Tibial artery (tissue), 4 donors: ENCODE measurements at regions of chr14 and their contacts with region 1.

Region 1: DNA sequence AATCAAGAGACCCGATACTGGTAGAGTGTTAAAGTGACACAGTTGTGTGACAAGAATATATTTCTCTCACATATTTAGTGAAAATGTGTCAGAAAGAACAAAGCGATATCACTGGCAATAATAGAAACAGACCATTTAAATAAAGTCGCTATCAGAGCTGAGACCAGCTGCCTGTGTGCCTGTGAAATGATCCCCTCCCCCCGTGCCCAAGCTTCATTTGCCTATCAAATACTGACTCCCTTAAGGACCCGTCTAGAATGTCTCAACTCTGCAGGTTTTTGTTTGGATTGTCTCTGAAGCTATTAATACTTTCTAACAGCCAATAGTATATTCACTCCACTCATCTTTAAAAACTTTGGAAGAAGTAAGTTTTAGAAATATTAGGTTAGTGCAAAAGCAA is 98.9 kb downstream of the EGLN3 start:
- DNase-seq: no peak
- H3K4me3 ChIP-seq: no peak overlapping the region
- H3K27ac ChIP-seq: no peak overlapping the region
- H3K4me1 ChIP-seq: no peaks in the 10 kb centered on the region
- H3K27me3 ChIP-seq: no peaks in the 10 kb centered on the region
- CTCF ChIP-seq: no peak

Region 2: GRCh38 chr14:33317675-33318074 is 534.3 kb before region 1 on chr14:
- intact Hi-C with region 1: no loop called
- DNase-seq: no peak
- H3K4me3 ChIP-seq: no peak overlapping the region
- H3K27ac ChIP-seq: no peak overlapping the region
- H3K4me1 ChIP-seq: no peaks in the 10 kb centered on the region
- H3K27me3 ChIP-seq: no peaks in the 10 kb centered on the region
- CTCF ChIP-seq: no peak

Region 3: DNA sequence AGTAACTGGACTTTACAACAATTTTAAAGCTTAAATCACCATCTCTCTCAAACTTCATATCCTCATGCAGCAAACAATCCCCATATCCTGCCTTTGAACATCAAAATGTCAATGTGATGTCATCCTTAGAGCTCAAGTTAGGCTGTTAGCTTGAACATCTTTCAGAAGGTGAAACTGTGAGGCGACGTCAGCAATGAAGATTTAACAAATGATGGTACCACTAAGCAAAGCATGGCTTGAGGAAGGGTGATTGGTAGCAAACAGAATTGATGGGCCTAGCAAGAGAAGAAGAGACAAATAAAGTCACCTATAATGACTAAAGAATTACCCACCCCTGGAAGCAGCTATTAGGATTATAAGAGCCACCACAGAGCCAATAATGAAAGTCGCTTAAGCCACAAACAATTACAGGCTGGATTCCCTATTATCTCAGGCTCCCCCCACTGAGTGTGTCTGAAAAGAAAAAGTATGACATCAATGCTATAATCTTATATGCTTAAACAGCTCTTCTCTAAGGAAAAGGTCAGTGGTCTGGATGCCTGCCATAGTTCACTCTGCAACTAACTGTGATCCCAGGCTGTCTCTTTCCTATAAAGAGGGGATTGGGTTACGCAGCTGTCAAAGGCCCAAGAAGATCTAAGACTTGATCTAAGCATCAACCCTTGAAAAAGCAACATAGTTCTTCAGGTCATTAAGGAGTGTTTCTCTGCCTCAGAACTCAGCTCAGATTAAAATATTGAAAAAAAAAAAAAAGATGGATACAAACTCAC is 80.8 kb after region 1 on chr14:
- intact Hi-C with region 1: no loop called
- DNase-seq: no peak
- H3K4me3 ChIP-seq: no peak overlapping the region
- H3K27ac ChIP-seq: no peak overlapping the region
- H3K4me1 ChIP-seq: peaks cover 0 to 47% (median 5%) of the 10 kb centered on the region in 4 donors
- H3K27me3 ChIP-seq: no peaks in the 10 kb centered on the region
- CTCF ChIP-seq: no peak

Region 4: GRCh38 chr14:34098045-34098984 is 246.4 kb after region 1 on chr14:
- intact Hi-C with region 1: loop called (anchors 5 kb)
- DNase-seq: peak in 1 of 2 donors; percentile 30
- H3K4me3 ChIP-seq: no peak overlapping the region
- H3K27ac ChIP-seq: no peak overlapping the region
- H3K4me1 ChIP-seq: peaks cover 0 to 9% (median 0%) of the 10 kb centered on the region in 4 donors
- H3K27me3 ChIP-seq: no peaks in the 10 kb centered on the region
- CTCF ChIP-seq: peak; percentile 69 to 82